HCT116 (cell line): ENCODE measurements at regions of chr6 and their contacts with region 1.

Region 1: DNA sequence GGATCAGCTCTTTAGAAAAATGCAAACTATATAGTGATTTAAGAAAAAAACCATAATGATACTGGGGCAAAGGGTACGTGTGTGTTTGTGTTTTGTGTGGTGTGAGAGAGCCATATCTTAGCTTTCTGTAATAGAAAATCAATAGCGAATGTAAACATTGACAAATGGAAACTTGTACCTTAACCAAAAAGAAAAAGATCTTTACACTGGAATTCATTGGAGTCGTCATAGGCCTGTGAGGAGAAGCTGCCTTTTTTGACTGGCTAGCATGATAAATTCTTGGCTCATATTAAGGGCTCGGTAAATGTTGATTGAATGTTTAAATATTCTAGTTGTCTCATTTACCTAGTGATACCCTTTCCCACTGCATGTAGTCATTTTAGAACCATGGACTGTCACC is 161.8 kb upstream of the ASCC3 start:
- DNase-seq: no peak
- ATAC-seq: no peak
- H3K4me3 ChIP-seq: no peak overlapping the region
- H3K27ac ChIP-seq: no peak overlapping the region
- H3K4me1 ChIP-seq: no peaks in the 10 kb centered on the region
- H3K27me3 ChIP-seq: no peaks in the 10 kb centered on the region
- CTCF ChIP-seq: no peak
- POLR2A ChIP-seq: no peak
- RAD21 ChIP-seq: no peak

Region 2: DNA sequence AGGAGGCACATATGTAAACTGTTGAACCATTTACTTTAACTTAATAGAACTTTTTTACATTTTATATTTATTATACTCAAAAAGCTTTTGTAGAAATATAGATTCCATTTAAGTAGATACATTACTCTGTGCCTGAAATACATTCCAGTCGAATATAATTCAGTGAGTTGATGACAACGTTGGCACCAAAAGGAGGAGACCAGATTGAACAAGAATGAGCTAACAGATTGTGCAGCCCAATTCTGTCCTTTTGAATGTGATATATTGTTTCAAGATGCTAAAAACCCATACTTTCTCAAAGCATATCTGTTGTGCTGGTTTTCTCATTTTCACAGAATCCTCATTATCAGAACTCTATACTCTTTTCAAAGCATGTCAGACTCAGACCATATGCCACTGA is 430.9 kb before region 1 on chr6:
- CTCF ChIA-PET with region 1: no interaction called
- POLR2A ChIA-PET with region 1: no interaction called
- RAD21 ChIA-PET with region 1: no interaction called
- intact Hi-C with region 1: no loop called
- DNase-seq: no peak
- ATAC-seq: no peak
- H3K4me3 ChIP-seq: no peak overlapping the region
- H3K27ac ChIP-seq: no peak overlapping the region
- H3K4me1 ChIP-seq: no peaks in the 10 kb centered on the region
- H3K27me3 ChIP-seq: no peaks in the 10 kb centered on the region
- CTCF ChIP-seq: no peak
- POLR2A ChIP-seq: no peak
- RAD21 ChIP-seq: no peak

Region 3: GRCh38 chr6:101830501-101831031 is 787.6 kb after region 1 on chr6:
- CTCF ChIA-PET with region 1: no interaction called
- POLR2A ChIA-PET with region 1: no interaction called
- RAD21 ChIA-PET with region 1: no interaction called
- intact Hi-C with region 1: loop called (anchors 5 kb)
- DNase-seq: no peak
- ATAC-seq: no peak
- H3K4me3 ChIP-seq: no peak overlapping the region
- H3K27ac ChIP-seq: no peak overlapping the region
- H3K4me1 ChIP-seq: no peaks in the 10 kb centered on the region
- H3K27me3 ChIP-seq: no peaks in the 10 kb centered on the region
- CTCF ChIP-seq: no peak
- POLR2A ChIP-seq: no peak
- RAD21 ChIP-seq: no peak